SK-N-SH (cell line): ENCODE measurements at regions of chr4 and their contacts with region 1.

Region 1: GRCh38 chr4:88533937-88534750 is 10.6 kb upstream of the PYURF start:
- DNase-seq: no peak
- H3K4me3 ChIP-seq: peak overlapping the region; percentile 17 to 46; a peak in 2 of 4 replicates
- H3K27ac ChIP-seq: peak overlapping the region; percentile 62 to 100; a peak in 3 of 4 replicates
- H3K4me1 ChIP-seq: peaks cover 0 to 11% of the 10 kb centered on the region in 2 experiments; a peak in 2 of 4 replicates
- H3K27me3 ChIP-seq: no peaks in the 10 kb centered on the region
- CTCF ChIP-seq: no peak
- EP300 ChIP-seq: peak in 1 of 2 experiments; percentile 59; a peak in 2 of 4 replicates
- RAD21 ChIP-seq: no peak

Region 2: DNA sequence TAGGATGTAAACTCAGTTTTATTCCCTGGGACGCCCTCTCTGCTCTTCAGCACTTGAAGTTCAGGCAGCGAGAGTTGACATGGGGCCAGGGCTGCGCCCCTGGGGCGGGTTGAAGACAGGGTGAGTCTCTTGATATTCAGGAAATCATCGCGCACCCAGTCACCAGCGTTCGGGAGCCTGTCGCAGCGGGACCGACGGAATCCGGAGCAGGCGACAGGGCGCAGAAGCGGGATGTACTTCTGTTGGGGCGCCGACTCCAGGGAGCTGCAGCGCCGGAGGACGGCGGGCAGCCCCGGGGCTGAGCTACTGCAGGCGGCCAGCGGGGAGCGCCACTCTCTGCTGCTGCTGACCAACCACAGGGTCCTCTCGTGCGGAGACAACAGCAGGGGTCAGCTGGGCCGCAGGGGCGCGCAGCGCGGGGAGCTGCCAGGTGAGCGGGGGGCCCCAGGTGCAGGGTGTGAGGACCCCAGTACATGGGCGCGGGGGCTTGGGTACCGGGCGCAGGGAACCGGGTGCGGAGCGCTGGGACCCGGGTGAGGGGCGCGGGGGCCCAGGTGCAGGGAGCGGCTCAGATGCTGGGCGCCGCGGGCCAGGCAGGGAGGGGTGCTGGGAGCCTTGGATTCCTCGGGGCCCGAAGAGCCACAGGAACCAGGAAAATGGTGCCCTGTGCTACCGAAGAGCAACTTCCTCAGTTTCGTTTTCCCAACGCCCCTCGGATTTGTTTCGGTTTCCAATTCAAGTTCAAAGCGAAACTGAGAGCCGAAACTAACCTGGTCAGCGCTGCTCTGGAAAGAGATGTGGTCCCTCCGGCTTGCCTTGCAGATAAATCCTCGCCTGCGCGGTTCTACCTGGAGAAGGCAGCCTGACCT is 155.2 kb before region 1 on chr4 and contains the start of gene HERC6:
- CTCF ChIA-PET with region 1: no interaction called
- POLR2A ChIA-PET with region 1: no interaction called
- DNase-seq: peak; percentile 90
- H3K4me3 ChIP-seq: peak within 1 kb of the TSS; percentile 75 to 76
- H3K27ac ChIP-seq: peak within 1 kb of the TSS; percentile 37 to 56; a peak in 3 of 4 replicates
- H3K4me1 ChIP-seq: no peaks in the 10 kb centered on the region
- H3K27me3 ChIP-seq: no peaks in the 10 kb centered on the region
- CTCF ChIP-seq: peak; percentile 70
- EP300 ChIP-seq: no peak
- RAD21 ChIP-seq: peak; percentile 53
- polyA plus RNA-seq, gene HERC6: 1.6 and 1.7 TPM in 2 replicates

Region 3: DNA sequence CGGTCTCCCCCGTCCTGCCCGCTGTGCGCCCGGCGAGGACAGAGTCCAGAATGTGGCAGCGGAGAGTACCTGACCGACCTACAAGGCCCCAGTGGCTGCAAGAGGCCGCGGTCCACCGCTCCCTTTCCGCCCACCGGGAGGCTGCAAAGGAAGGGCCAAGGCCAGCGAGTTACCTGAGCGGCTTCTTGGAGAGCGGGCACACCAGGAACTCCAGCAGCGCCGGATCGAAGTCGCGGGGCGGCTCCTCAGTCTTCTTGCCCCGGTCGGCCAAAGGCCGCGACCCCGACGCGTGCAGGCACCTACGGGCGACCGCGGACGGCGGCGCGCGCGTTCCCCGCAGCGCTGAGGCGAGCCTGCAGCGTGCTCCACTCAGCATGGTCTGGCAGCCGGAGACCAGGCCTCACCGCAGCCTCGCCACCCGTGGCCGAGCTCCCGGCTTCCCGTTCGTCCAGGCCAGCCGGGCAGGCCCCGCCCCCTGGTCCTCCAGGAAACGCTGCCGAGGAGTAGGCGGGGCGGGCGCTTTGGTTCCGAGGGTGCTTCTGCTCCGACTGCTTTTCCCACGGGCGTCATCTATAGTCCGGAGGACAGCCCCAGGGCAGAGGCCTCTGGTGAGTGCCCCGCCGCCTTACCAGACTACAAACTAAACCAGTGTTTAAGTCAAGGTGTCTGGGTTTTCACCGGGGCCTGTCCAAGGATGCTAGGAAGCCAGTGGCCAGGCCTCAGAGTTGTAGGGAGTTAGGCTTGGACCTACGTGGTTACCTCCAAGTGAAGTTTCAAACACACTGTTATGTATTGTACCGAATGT is 10.6 kb before region 1 on chr4 and contains the start of gene PYURF:
- CTCF ChIA-PET with region 1: interaction called, 16 read pairs
- POLR2A ChIA-PET with region 1: interaction called, 3 read pairs
- DNase-seq: peak; percentile 93
- H3K4me3 ChIP-seq: peak within 1 kb of the TSS; percentile 92 to 95
- H3K27ac ChIP-seq: peak within 1 kb of the TSS; percentile 89 to 97
- H3K4me1 ChIP-seq: peaks cover 0 to 13% of the 10 kb centered on the region in 2 experiments; a peak in 2 of 4 replicates
- H3K27me3 ChIP-seq: no peaks in the 10 kb centered on the region
- CTCF ChIP-seq: no peak
- EP300 ChIP-seq: peak in 1 of 2 experiments; percentile 30; a peak in 1 of 4 replicates
- RAD21 ChIP-seq: no peak
- polyA plus RNA-seq, gene PYURF: 52.0 and 63.2 TPM in 2 replicates